Testis (tissue), 5 donors: ENCODE measurements at regions of chr12 and their contacts with region 1.

Region 1: GRCh38 chr12:77925536-77926108 is 94.9 kb downstream of the NAV3 start:
- DNase-seq: peak; percentile 89
- H3K4me3 ChIP-seq: no peak overlapping the region
- H3K27ac ChIP-seq: no peak overlapping the region
- H3K4me1 ChIP-seq: no peaks in the 10 kb centered on the region
- H3K27me3 ChIP-seq: no peaks in the 10 kb centered on the region
- CTCF ChIP-seq: peak; percentile 78 to 83 (median 80)
- POLR2A ChIP-seq: no peak

Region 2: DNA sequence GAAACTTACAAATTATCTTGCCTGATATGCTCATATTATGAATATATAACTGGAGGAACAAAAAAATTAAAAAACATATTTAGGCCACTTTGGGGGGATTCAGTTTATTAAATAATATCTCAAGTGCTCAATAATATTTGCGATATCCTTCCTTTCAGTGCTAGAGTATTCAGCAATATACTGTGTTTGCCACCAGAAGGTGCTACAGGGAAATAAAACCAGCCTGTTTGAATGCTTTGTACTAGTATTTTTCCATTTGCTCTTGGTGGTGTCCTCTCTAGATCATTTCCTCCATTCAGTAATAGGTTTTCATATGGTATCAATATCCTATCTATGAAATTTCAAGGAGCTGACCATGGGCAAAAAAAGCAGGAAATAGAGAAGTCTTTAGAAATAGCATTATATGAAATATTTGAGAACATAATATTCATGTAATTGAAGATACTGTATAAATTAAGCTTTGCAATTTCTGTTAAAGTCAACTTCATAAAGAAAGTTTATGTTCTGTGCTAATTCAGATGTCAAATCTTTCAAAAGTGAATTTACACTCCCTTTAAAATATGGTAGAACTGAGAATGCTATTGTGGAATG is 201.2 kb before region 1 on chr12:
- intact Hi-C with region 1: loop called (anchors 10 kb)
- DNase-seq: no peak
- H3K4me3 ChIP-seq: no peak overlapping the region
- H3K27ac ChIP-seq: no peak overlapping the region
- H3K4me1 ChIP-seq: no peaks in the 10 kb centered on the region
- H3K27me3 ChIP-seq: no peaks in the 10 kb centered on the region
- CTCF ChIP-seq: peak in 2 of 3 experiments; percentile 33 to 55
- POLR2A ChIP-seq: no peak

Region 3: GRCh38 chr12:77830583-77831351 is 94.9 kb before region 1 on chr12 and contains the start of gene NAV3:
- intact Hi-C with region 1: no loop called
- DNase-seq: no peak
- H3K4me3 ChIP-seq: no peak within 1 kb of the TSS
- H3K27ac ChIP-seq: no peak within 1 kb of the TSS
- H3K4me1 ChIP-seq: no peaks in the 10 kb centered on the region
- H3K27me3 ChIP-seq: no peaks in the 10 kb centered on the region
- CTCF ChIP-seq: peak in 1 of 3 experiments; percentile 42
- POLR2A ChIP-seq: no peak
- total RNA-seq, gene NAV3: 20.0 to 21.9 TPM

Region 4: GRCh38 chr12:77957062-77957461 is 31.4 kb after region 1 on chr12:
- intact Hi-C with region 1: no loop called
- DNase-seq: no peak
- H3K4me3 ChIP-seq: no peak overlapping the region
- H3K27ac ChIP-seq: no peak overlapping the region
- H3K4me1 ChIP-seq: no peaks in the 10 kb centered on the region
- H3K27me3 ChIP-seq: no peaks in the 10 kb centered on the region
- CTCF ChIP-seq: no peak
- POLR2A ChIP-seq: no peak